Esophagus muscularis mucosa (tissue), 4 donors: ENCODE measurements at regions of chr15 and their contacts with region 1.

Region 1: GRCh38 chr15:101641166-101641764 is 10.9 kb downstream of the TM2D3 start:
- DNase-seq: peak; percentile 94
- H3K4me3 ChIP-seq: no peak overlapping the region
- H3K27ac ChIP-seq: peak overlapping the region; percentile 12 to 44 (median 24)
- H3K4me1 ChIP-seq: peaks cover 13 to 28% (median 18%) of the 10 kb centered on the region in 4 donors
- H3K27me3 ChIP-seq: no peaks in the 10 kb centered on the region
- CTCF ChIP-seq: peak; percentile 87 to 96 (median 92)
- EP300 ChIP-seq: no peak
- POLR2A ChIP-seq: no peak

Region 2: GRCh38 chr15:101294731-101295606 is 346.3 kb before region 1 on chr15 and contains the start of gene SNRPA1:
- intact Hi-C with region 1: loop called (anchors 5 kb)
- DNase-seq: peak; percentile 99
- H3K4me3 ChIP-seq: peak within 1 kb of the TSS; percentile 71 to 98 (median 92)
- H3K27ac ChIP-seq: peak within 1 kb of the TSS; percentile 92 to 98 (median 94)
- H3K4me1 ChIP-seq: peaks cover 26 to 38% (median 34%) of the 10 kb centered on the region in 4 donors
- H3K27me3 ChIP-seq: no peaks in the 10 kb centered on the region
- CTCF ChIP-seq: no peak
- EP300 ChIP-seq: no peak
- POLR2A ChIP-seq: peak; percentile 82
- total RNA-seq, gene SNRPA1: 19.9 to 35.7 (median 25.2) TPM